ENCODE measurements at regions of chr3 and their contacts with region 1.

Region 1: DNA sequence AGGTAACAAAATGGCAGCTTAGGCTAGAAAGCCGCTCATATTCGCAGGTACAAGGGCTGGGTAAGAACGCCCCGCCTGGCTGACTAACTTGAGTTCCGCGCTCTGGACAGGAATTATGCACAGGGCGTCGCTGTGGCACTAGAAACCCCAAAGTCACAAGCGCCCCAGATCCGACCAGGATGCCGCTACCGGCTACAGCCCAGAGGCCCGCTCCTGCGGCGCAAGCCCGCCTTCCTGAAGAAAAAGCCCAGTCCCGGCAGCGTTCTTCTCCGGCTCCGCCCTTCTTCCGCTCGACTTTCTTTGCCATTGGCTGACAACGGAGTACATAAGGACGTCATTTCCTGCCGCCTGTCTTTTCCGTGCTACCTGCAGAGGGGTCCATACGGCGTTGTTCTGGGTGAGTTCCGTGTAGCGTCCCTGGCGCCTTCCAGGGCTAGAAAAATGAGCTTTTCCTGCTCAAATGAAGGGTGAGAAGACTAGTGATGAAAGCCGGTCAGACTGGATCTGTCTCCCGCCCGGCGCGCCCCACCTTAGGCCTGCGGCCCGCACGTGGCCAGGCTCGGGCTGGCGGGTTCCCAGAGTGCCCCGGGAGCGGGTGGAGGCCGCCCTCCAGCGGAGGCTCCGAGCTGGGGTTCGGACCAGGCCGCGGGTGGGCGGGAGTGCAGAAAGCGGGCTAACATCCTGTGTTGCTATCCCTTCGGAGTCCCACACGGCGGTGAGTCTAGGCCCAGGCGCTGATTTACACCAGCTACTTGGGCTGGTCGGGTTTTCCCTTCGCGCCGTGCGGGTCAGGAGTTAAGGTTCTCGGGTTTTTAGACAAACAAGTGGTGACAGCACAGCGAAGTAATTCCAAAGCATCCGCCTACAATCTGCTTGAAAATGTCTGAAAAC is at the start of gene RPSA:
- DNase-seq: peak; percentile 91 to 99 (median 96)

Region 2: GRCh38 chr3:39383045-39383880 is 23.4 kb before region 1 on chr3 and contains the start of gene SLC25A38:
- intact Hi-C with region 1: loop called (anchors 1 kb)
- DNase-seq: peak; percentile 67 to 98 (median 90)

Region 3: DNA sequence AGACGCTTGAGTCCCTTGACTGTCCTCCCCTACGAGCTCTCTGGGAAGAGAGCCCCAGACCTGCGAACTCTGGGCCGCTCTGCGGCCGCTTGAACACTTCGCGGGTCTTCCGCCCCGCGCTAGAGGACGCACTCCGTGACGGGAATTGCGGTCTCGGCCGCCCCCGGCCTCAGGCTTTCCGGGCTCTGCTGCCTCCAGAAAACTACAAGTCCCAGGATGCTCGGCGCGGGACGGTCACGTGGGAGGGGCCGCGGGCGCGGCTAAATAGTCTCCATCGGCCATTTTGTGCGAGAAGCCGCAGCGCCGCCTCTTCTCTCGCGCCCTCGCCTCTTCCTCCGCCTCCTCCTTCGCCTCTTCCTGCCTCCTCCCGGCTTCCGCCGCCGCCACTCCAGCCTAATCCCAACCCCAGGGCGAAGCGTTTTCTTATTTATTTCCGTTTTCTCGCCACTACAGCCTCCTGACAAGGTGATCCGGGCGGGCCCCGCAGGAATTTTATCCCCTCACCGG is 902.9 kb after region 1 on chr3 and contains the start of gene EIF1B:
- intact Hi-C with region 1: loop called (anchors 2 kb)
- DNase-seq: peak; percentile 96 to 100 (median 99)